Left ventricle myocardium inferior (tissue), 1 donor: ENCODE measurements at regions of chr17 and their contacts with region 1.

Region 1: GRCh38 chr17:35766903-35767510 is 6.3 kb downstream of the C17orf50 start:
- DNase-seq: no peak
- H3K4me3 ChIP-seq: no peak overlapping the region
- H3K27ac ChIP-seq: no peak overlapping the region
- H3K4me1 ChIP-seq: peaks cover 12% of the 10 kb centered on the region
- H3K27me3 ChIP-seq: no peaks in the 10 kb centered on the region
- CTCF ChIP-seq: peak; percentile 69

Region 2: DNA sequence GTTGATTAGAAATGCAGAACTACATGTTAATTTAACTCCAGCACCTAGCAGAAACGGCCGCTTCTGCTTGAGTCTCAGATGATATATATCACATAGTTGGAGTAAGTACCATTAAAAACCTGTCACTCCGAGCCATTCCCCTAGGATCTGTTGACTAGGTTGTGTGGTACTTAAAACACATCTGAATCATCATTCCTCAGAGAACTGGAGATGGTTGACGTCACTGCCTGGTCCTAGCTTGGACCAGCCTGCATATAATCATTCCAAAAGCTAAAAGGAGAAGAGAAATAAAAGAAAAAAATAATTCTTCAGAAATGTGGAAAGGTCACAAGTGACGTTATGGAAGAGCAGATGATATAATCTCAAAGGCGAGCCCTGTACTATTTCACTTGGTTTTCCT is 66.9 kb before region 1 on chr17:
- intact Hi-C with region 1: no loop called
- DNase-seq: no peak
- H3K4me3 ChIP-seq: no peak overlapping the region
- H3K27ac ChIP-seq: no peak overlapping the region
- H3K4me1 ChIP-seq: peaks cover 12% of the 10 kb centered on the region
- H3K27me3 ChIP-seq: no peaks in the 10 kb centered on the region
- CTCF ChIP-seq: no peak

Region 3: GRCh38 chr17:35804658-35805192 is 37.7 kb after region 1 on chr17:
- intact Hi-C with region 1: loop called (anchors 2 kb)
- DNase-seq: no peak
- H3K4me3 ChIP-seq: no peak overlapping the region
- H3K27ac ChIP-seq: no peak overlapping the region
- H3K4me1 ChIP-seq: peaks cover 44% of the 10 kb centered on the region
- H3K27me3 ChIP-seq: no peaks in the 10 kb centered on the region
- CTCF ChIP-seq: peak; percentile 89

Region 4: GRCh38 chr17:35819456-35819855 is 52.4 kb after region 1 on chr17:
- intact Hi-C with region 1: no loop called
- DNase-seq: no peak
- H3K4me3 ChIP-seq: no peak overlapping the region
- H3K27ac ChIP-seq: no peak overlapping the region
- H3K4me1 ChIP-seq: peaks cover 36% of the 10 kb centered on the region
- H3K27me3 ChIP-seq: no peaks in the 10 kb centered on the region
- CTCF ChIP-seq: no peak